Right ventricle myocardium superior (tissue), 1 donor: ENCODE measurements at regions of chr3 and their contacts with region 1.

Region 1: DNA sequence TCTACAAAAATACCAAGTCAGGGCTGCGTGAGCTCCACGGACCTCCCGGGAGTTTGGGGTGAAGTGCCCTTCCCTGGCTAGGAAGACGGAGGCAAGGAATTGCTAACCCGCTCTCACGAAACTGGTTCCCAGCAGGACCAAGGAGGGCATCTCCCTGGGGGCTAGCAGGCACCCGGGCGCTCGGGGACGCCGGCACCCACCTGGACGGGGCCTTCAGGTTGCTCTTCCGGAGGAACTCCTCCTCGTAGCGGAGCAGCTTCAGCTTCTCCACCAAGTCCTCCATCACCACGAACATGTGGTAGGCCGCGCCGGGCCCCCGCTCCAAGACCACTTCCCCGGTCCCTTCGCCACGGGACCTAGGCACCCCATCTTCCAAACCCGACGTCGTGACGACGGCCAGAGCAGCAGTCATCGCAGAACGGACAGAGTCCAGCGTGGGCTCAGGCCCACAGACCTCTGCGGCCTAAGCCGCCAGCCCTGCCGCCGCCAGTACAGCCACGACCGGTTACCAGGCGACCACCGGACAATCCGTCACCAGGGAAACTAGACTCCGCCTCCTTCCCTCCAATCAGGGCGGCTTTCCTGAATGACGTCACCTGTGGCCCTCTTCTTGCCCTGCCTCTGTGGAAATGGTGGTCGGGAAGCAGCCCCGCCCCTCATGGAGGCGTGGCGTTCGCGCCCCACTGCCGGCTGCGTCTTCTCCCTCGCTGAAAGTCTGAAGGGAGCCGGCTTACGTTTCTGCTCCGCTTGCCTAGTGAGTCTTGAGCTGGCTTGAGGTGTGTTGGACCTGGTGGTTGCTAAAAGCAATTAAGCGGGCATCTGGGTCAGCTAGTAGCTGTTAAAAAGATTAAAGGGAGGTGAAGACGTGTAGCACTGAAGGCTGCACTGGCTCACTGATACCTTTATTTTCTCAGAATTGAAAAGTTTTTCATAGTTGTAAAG is at the start of gene IFT57:
- DNase-seq: peak; percentile 97
- ATAC-seq: peak; percentile 99
- total RNA-seq, gene IFT57: 18.7 TPM

Region 2: DNA sequence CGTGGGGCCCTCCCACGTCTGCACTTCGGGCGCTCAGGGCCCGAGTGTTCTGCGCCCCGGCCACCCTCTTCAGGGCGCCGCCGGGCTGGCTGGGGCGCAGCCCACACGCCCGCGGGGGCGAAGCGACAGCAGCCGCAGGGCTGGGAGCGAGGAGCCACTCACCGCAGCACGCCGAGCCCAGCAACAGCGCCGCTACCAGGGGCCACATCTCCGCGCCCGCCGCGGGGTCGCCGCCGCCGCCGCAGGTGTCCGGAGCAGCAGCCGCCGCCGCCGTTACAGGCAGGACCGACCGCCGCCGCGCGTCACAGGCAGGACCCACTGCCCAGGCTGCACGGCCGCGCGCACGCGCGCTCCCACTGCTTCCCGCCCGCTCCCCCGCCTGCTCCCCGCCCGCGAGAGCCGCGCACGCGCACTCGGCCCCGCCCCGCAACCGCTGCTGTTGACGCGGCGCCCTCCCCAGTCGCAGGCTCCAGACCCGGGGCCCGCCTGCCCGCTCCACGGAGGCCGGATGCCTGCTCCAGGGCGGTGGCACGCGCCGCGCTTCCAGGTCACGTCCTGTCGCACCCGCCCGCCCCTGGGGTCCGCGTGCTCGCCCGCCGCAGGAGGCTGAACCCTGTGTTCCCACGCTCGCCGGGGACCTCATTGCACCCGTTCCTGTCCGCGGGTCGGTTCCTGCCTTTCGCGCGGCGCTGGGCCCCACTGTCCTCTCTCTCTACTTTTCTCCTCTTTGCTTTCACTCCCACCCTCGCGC is 131.3 kb before region 1 on chr3 and contains the start of gene CD47:
- intact Hi-C with region 1: loop called (anchors 5 kb)
- DNase-seq: peak; percentile 97
- ATAC-seq: peak; percentile 97
- total RNA-seq, gene CD47: 46.2 TPM